Pancreas (tissue), 10 donors: ENCODE measurements at regions of chr11 and their contacts with region 1.

Region 1: DNA sequence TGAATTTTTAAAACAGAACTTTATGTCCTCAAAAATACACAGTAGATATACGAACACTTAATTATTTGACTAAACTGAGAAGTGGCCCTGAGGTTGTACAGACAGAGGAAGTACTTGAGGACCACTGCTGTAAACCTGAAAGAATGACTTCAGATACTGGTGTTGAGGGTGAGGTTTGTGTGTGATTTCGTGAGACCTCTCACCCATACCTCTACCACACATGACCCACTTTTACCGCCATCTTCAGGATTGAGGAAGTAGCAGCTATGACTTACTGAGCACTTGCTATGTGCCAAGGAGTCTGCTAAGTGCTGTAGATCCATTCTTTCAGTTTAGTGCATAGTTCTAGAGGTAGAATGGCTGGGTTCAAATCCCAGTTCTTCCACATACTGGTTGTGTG is 21.9 kb downstream of the MMP13 start:
- DNase-seq: no peak
- ATAC-seq: no peak
- H3K4me3 ChIP-seq: no peak overlapping the region
- H3K27ac ChIP-seq: no peak overlapping the region
- H3K4me1 ChIP-seq: no peaks in the 10 kb centered on the region
- H3K27me3 ChIP-seq: peaks cover 0 to 5% (median 0%) of the 10 kb centered on the region in 4 donors
- CTCF ChIP-seq: no peak

Region 2: GRCh38 chr11:102733232-102733875 is 200.3 kb before region 1 on chr11:
- intact Hi-C with region 1: loop called in 1 of 3 experiments (anchors 10 kb)
- DNase-seq: peak; percentile 23 to 84 (median 53)
- ATAC-seq: peak; percentile 69 to 89 (median 88)
- H3K4me3 ChIP-seq: no peak overlapping the region
- H3K27ac ChIP-seq: no peak overlapping the region
- H3K4me1 ChIP-seq: no peaks in the 10 kb centered on the region
- H3K27me3 ChIP-seq: no peaks in the 10 kb centered on the region
- CTCF ChIP-seq: peak; percentile 45 to 73 (median 69)